Naive thymus-derived CD4-positive, alpha-beta T cell (primary cell): ENCODE measurements at regions of chr17 and their contacts with region 1.

Region 1: DNA sequence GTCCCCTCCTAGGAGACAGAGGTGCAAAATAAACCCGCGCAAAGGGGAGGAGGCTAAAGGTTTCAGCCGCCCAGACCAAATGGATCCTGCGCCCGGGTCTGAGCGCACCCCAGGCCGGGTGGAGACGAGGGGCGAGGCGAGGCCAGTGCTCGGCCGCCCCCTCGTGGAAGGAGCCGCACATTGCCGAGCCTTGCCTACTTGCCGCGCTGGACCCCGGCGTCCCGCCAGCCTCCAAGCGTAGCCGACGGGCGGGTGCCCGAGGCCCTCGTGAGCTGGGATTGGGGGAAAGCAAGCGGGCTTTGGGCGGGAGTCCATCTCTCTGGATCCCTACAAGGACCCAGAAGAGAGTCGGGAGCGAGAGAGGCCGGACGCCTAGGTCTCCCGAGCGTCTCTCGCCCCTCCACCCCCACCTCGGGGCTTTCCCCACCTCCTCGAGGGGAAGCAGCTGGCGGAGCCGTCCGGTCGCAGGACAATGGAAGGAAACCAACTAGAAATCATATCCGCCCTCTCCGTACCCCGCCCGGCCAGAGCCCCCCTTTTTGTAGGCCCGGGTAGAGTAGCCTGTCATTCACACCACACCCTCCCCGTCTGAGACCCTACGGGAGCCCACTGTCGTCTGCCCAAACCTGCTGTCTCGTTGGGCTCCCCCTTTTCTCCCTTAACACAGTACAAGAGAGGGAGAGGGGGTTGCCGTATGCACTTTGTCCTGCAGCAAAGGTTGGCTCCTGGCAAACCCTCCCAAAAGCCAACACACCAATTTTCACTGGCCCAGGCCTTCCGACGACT is 664 bp upstream of the BCL6B start:
- DNase-seq: peak; percentile 52 to 86 (median 71)
- ATAC-seq: peak; percentile 81
- H3K4me3 ChIP-seq: peak overlapping the region; percentile 44
- H3K4me3 Mint-ChIP-seq: peak overlapping the region; percentile 58 to 84 (median 78)
- H3K27ac ChIP-seq: peak overlapping the region; percentile 48
- H3K27ac Mint-ChIP-seq: peak overlapping the region in 7 of 9 donors; percentile 17 to 92 (median 78)
- H3K4me1 ChIP-seq: peaks cover 21 to 30% of the 10 kb centered on the region in 2 donors
- H3K4me1 Mint-ChIP-seq: peaks cover 17 to 61% (median 30%) of the 10 kb centered on the region in 7 donors
- H3K27me3 ChIP-seq: no peaks in the 10 kb centered on the region
- H3K27me3 Mint-ChIP-seq: no peaks in the 10 kb centered on the region

Region 2: GRCh38 chr17:7004398-7005253 is 17.6 kb before region 1 on chr17:
- CTCF ChIA-PET with region 1: interaction called, 12 read pairs
- POLR2A ChIA-PET with region 1: interaction called, 3 read pairs
- intact Hi-C with region 1: loop called in 1 of 2 experiments (anchors 1 kb)
- DNase-seq: peak in 7 of 9 donors; percentile 67 to 80 (median 77)
- ATAC-seq: peak; percentile 98
- H3K4me3 ChIP-seq: no peak overlapping the region
- H3K4me3 Mint-ChIP-seq: no peak overlapping the region
- H3K27ac ChIP-seq: no peak overlapping the region
- H3K27ac Mint-ChIP-seq: peak overlapping the region in 8 of 9 donors; percentile 5 to 60 (median 31)
- H3K4me1 ChIP-seq: no peaks in the 10 kb centered on the region
- H3K4me1 Mint-ChIP-seq: peaks cover 14 to 42% (median 27%) of the 10 kb centered on the region in 7 donors
- H3K27me3 ChIP-seq: no peaks in the 10 kb centered on the region
- H3K27me3 Mint-ChIP-seq: no peaks in the 10 kb centered on the region

Region 3: DNA sequence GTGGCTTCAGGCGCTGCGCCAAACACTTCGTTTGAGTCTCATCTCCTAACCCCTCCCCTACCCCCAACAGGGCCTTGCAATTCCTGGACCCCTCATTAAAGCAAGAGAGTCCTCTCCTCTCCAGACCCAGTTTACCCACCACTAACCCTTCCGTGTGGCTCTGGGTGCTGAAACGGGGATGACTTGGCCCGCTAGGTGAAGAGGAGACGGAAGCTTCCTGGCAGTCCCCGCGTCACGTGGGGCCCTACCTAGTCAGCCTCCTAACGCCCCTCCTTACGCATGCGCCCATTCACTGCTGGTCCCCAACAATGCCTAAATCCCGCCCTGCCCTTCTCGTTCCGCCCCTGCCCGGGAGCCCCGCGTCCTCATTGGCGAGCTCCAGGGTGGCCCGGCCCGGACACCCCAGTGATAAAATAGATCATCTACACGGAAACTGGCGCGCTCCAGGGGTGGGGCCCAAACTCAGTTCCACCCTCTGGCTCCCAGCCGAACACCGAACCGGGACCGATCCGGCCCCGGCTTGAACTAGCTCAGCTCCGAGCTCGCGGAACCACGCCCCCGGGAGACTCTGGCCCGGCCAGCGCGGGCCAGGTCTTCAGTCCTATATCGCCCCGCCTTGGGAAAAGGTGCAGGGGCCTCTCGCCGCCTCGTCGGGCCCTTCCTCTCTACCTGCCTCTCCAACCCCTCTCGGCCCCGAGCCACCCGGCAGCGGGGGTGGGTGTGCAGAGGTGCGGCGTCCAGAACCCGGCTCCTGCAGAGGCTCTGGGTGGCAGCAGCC is 13.6 kb after region 1 on chr17 and contains the start of gene SLC16A13:
- CTCF ChIA-PET with region 1: interaction called, 9 read pairs
- POLR2A ChIA-PET with region 1: interaction called, 50 read pairs
- intact Hi-C with region 1: loop called (anchors 1 kb)
- DNase-seq: peak; percentile 87 to 99 (median 97)
- ATAC-seq: peak; percentile 95
- H3K4me3 ChIP-seq: peak within 1 kb of the TSS; percentile 67
- H3K4me3 Mint-ChIP-seq: peak within 1 kb of the TSS; percentile 89 to 95 (median 93)
- H3K27ac ChIP-seq: peak within 1 kb of the TSS; percentile 94
- H3K27ac Mint-ChIP-seq: peak within 1 kb of the TSS; percentile 96 to 99 (median 98)
- H3K4me1 ChIP-seq: peaks cover 26 to 36% of the 10 kb centered on the region in 2 donors
- H3K4me1 Mint-ChIP-seq: peaks cover 39 to 80% (median 58%) of the 10 kb centered on the region in 7 donors
- H3K27me3 ChIP-seq: no peaks in the 10 kb centered on the region
- H3K27me3 Mint-ChIP-seq: no peaks in the 10 kb centered on the region
- total RNA-seq, gene SLC16A13: 3.4 to 20.9 (median 15.0) TPM